Common myeloid progenitor, CD34-positive (primary cell): ENCODE measurements at regions of chr3 and their contacts with region 1.

Region 1: GRCh38 chr3:4633078-4634004 is 140.2 kb downstream of the ITPR1 start:
- DNase-seq: peak; percentile 68 to 81 (median 81)
- H3K4me3 ChIP-seq: no peak overlapping the region
- H3K27ac ChIP-seq: no peak overlapping the region
- H3K4me1 ChIP-seq: peaks cover 0 to 4% (median 0%) of the 10 kb centered on the region in 4 experiments
- H3K27me3 ChIP-seq: no peaks in the 10 kb centered on the region

Region 2: DNA sequence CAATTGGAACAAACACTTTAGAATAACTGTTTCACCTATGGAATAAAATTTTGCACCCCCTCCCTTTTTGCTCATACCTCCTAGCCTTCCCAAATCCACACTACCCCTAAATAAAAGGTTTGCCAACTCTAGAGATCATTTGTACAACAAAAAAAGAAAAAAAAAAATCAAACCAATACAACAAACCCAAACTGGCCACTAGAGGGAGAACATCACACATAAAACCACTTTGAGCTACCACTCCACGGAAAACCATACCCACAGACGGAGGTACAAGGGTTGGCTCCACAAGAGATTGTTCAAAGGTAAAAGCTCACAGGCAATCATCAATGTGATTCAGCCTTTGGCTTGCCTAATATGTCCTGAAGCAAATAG is 282.6 kb before region 1 on chr3:
- CTCF ChIA-PET with region 1: interaction called, 64 read pairs
- POLR2A ChIA-PET with region 1: no interaction called
- DNase-seq: peak; percentile 85 to 92 (median 89)
- H3K4me3 ChIP-seq: peak overlapping the region in 5 of 7 experiments; percentile 59 to 83 (median 75)
- H3K27ac ChIP-seq: peak overlapping the region in 1 of 2 experiments; percentile 77
- H3K4me1 ChIP-seq: peaks cover 4 to 14% (median 12%) of the 10 kb centered on the region in 4 experiments
- H3K27me3 ChIP-seq: no peaks in the 10 kb centered on the region

Region 3: GRCh38 chr3:4512895-4513616 is 120.3 kb before region 1 on chr3:
- CTCF ChIA-PET with region 1: interaction called, 20 read pairs
- POLR2A ChIA-PET with region 1: no interaction called
- DNase-seq: peak in 1 of 3 donors; percentile 72
- H3K4me3 ChIP-seq: peak overlapping the region in 1 of 7 experiments; percentile 0
- H3K27ac ChIP-seq: peak overlapping the region in 1 of 2 experiments; percentile 39
- H3K4me1 ChIP-seq: peaks cover 18 to 76% (median 56%) of the 10 kb centered on the region in 4 experiments
- H3K27me3 ChIP-seq: no peaks in the 10 kb centered on the region

Region 4: GRCh38 chr3:4533489-4534443 is 99.6 kb before region 1 on chr3:
- CTCF ChIA-PET with region 1: interaction called, 13 read pairs
- POLR2A ChIA-PET with region 1: no interaction called
- DNase-seq: peak; percentile 93 to 99 (median 97)
- H3K4me3 ChIP-seq: peak overlapping the region in 5 of 7 experiments; percentile 16 to 57 (median 54)
- H3K27ac ChIP-seq: peak overlapping the region; percentile 69 to 83
- H3K4me1 ChIP-seq: peaks cover 20 to 74% (median 59%) of the 10 kb centered on the region in 4 experiments
- H3K27me3 ChIP-seq: no peaks in the 10 kb centered on the region

Region 5: DNA sequence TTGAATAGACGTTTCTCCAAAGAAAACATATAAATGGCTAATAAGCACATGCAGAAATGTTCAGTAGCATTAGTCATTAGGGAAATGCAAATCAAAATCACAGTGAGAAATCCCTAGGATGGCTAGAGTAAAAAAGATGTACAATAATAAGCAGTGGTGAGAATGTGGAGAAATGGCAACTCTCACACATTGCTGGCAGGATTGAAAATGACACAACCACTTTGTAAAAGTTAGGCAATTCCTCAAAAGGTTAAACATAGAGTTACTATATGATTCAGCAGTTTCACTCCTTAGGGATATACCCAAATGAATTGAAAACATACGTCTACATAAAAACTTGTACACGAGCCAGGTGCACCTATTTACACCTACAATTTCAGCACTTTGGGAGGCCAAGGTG is 31.4 kb before region 1 on chr3:
- CTCF ChIA-PET with region 1: interaction called, 12 read pairs
- POLR2A ChIA-PET with region 1: no interaction called
- DNase-seq: no peak
- H3K4me3 ChIP-seq: no peak overlapping the region
- H3K27ac ChIP-seq: no peak overlapping the region
- H3K4me1 ChIP-seq: peaks cover 2 to 7% (median 4%) of the 10 kb centered on the region in 4 experiments
- H3K27me3 ChIP-seq: no peaks in the 10 kb centered on the region

Region 6: GRCh38 chr3:4643904-4644547 is 10.7 kb after region 1 on chr3:
- CTCF ChIA-PET with region 1: interaction called, 13 read pairs
- POLR2A ChIA-PET with region 1: interaction called, 5 read pairs
- DNase-seq: no peak
- H3K4me3 ChIP-seq: no peak overlapping the region
- H3K27ac ChIP-seq: no peak overlapping the region
- H3K4me1 ChIP-seq: no peaks in the 10 kb centered on the region
- H3K27me3 ChIP-seq: no peaks in the 10 kb centered on the region